ENCODE measurements at regions of chr17 and their contacts with region 1.

Region 1: GRCh38 chr17:29283271-29283895 is 10.6 kb downstream of the NUFIP2 start:
- DNase-seq: no peak
- ATAC-seq: no peak
- H3K4me3 ChIP-seq: no peak overlapping the region
- H3K27ac ChIP-seq: no peak overlapping the region
- H3K4me1 ChIP-seq: peaks cover 64% of the 10 kb centered on the region
- H3K27me3 ChIP-seq: no peaks in the 10 kb centered on the region
- CTCF ChIP-seq: no peak
- POLR2A ChIP-seq: no peak

Region 2: DNA sequence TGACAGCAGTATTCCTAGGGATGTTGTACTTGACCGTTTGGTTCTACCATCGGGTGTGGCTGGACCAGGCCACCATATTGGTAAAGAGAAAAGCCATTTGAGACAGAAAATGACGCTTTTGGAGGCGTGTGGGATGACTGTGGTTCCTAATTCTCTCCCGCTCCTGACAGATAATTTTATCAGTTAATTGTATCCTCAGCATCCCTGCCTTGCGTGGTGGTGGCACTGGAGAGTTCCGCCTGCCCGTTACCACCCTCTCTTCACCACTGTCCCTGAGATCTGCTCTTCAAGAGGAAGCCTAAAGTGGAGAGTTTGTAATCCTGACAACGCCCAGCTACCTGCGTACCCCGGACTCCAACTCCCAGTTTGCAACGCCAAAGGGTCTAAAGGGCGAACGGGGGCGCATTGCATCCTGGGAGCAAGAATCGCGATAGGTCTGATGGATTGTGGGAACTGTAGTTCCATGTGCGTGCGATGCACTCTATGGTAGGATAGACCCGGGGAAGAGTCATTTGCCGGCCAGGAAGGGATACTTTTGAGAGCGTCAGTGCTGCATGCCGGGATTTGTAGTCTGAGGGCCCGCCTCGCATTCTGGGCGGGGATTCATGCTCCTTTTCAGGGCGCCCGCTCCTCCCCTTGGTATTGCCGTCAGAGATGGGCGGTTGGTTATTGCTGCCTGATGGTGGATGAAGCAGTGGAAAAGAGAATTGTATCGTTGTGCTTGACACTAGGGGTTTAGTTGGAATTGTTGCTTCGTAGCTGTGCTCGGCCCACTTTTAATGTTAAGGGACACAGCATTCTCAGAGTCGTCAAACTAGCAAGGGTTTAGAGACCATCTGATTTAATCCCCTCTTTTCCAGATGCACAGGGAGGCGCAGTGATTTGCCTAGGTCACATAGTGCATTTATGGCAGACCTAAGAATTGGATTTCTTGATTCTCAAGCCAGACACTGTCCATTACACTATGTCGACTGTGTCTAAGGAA is 331.1 kb before region 1 on chr17:
- intact Hi-C with region 1: loop called (anchors 10 kb)
- DNase-seq: peak; percentile 97 to 99 (median 98)
- ATAC-seq: peak; percentile 79
- H3K4me3 ChIP-seq: peak overlapping the region; percentile 3 to 34
- H3K27ac ChIP-seq: peak overlapping the region; percentile 92 to 100 (median 98)
- H3K4me1 ChIP-seq: peaks cover 25% of the 10 kb centered on the region
- H3K27me3 ChIP-seq: no peaks in the 10 kb centered on the region
- CTCF ChIP-seq: peak in 1 of 7 experiments; percentile 16
- POLR2A ChIP-seq: peak; percentile 8 to 80 (median 76)

Region 3: DNA sequence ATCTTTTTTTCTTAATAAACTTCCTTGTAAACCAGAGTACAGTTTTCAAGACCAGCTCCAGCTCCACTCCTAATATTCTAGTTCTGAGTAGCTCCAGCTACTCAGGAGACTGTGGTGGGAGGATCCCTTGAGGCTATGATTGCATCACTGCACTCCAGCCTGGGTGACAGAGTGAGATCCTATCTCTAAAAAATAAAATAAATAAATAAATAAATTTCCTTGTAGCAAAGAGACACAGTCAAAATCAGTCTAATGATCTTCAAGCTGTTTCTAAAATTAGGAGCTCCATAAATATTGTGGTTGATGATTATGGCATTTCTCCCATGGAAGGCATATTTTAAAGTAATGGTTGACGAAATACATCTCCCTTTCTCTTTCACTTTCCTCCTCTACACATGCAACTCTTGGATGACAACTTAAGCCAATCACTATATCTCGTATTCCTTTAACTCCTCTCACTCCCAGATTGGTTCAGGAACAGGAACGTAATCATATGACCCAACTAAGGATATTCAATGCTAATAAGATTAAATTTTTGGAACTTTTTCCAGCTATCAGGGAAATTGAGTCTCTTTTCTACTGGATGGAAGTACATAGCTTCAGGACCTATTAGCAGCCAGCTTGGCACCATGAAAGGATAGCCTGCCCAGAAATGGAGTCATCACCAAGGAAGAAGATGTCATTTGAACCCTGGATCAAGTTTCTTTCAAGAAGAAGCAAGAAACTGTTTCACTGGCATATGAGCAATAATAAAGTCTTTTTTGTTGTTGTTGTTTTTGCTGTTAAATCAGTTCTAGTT is 64.6 kb after region 1 on chr17:
- intact Hi-C with region 1: no loop called
- DNase-seq: peak in 1 of 4 donors; percentile 3
- ATAC-seq: no peak
- H3K4me3 ChIP-seq: no peak overlapping the region
- H3K27ac ChIP-seq: no peak overlapping the region
- H3K4me1 ChIP-seq: no peaks in the 10 kb centered on the region
- H3K27me3 ChIP-seq: no peaks in the 10 kb centered on the region
- CTCF ChIP-seq: no peak
- POLR2A ChIP-seq: no peak

Measured in body of pancreas (tissue), 4 donors.